Activated CD4-positive, alpha-beta memory T cell treated with anti-CD3 and anti-CD28 coated beads, Interleukin-2, amount 10 ng/mL, durations not matched to agents 7 days and 5 days (primary cell): ENCODE measurements at regions of chr2 and their contacts with region 1.

Region 1: DNA sequence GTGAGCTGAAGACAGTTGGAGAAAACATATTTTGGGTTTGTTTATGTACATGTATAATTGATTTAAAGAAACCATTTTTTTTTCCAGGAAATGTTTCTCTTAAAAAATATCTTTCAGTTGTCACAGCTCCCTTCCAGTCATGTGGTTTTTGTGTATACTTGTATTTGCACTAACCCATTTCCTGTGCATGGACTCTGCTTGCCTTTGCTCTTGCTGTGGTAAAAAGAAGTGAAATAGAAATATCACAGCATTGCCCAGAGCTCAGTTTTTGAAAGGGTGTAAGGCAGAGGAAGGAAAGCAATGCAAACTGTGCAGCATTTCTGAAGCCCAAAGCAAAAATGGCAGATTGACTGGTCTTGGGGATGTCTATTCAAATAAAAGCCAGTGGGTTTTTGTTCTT is 10.4 kb upstream of the DOCK10 start:
- DNase-seq: peak; percentile 50
- H3K4me3 Mint-ChIP-seq: peak overlapping the region; percentile 15
- H3K27ac Mint-ChIP-seq: peak overlapping the region; percentile 84
- H3K4me1 Mint-ChIP-seq: peaks cover 65% of the 10 kb centered on the region
- H3K27me3 Mint-ChIP-seq: peaks cover 15% of the 10 kb centered on the region

Region 2: GRCh38 chr2:225064362-225064761 is 11.7 kb after region 1 on chr2:
- CTCF ChIA-PET with region 1: interaction called, 6 read pairs
- POLR2A ChIA-PET with region 1: interaction called, 14 read pairs
- DNase-seq: no peak
- H3K4me3 Mint-ChIP-seq: no peak overlapping the region
- H3K27ac Mint-ChIP-seq: no peak overlapping the region
- H3K4me1 Mint-ChIP-seq: peaks cover 26% of the 10 kb centered on the region
- H3K27me3 Mint-ChIP-seq: no peaks in the 10 kb centered on the region

Region 3: DNA sequence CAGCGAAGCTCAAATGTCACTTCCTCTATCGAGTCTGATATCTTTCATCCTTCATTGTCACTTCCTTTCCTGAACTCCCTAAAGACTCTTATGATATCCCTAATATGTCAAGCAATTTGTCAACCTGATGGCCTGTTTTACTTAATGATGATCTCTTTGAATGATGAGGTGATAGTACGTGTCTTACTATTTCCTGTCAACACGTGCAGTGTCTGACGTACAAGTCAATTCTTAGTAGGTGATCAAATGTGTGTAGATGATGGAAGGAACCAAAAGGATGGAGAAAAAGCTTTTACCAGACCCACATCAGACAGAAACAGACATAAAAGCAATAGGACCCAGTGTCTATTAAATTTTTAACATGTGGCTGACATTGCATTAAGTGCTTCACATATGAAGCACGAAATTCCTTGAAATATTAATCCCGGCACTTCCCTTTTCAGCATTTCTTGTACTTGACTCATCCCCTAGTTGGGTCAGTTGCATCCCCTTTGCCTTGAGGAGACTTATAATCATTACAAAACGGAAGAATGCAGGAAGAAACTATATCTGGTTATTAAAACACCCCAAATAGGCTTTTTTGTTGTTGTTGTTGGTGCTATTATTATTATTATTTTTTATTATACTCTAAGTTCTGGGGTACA is 238.2 kb after region 1 on chr2:
- CTCF ChIA-PET with region 1: no interaction called
- POLR2A ChIA-PET with region 1: no interaction called
- DNase-seq: no peak
- H3K4me3 Mint-ChIP-seq: no peak overlapping the region
- H3K27ac Mint-ChIP-seq: no peak overlapping the region
- H3K4me1 Mint-ChIP-seq: no peaks in the 10 kb centered on the region
- H3K27me3 Mint-ChIP-seq: no peaks in the 10 kb centered on the region

Region 4: GRCh38 chr2:225337183-225337582 is 284.5 kb after region 1 on chr2:
- CTCF ChIA-PET with region 1: no interaction called
- POLR2A ChIA-PET with region 1: no interaction called
- DNase-seq: no peak
- H3K4me3 Mint-ChIP-seq: no peak overlapping the region
- H3K27ac Mint-ChIP-seq: no peak overlapping the region
- H3K4me1 Mint-ChIP-seq: no peaks in the 10 kb centered on the region
- H3K27me3 Mint-ChIP-seq: peaks cover 2% of the 10 kb centered on the region